Naive thymus-derived CD4-positive, alpha-beta T cell (primary cell): ENCODE measurements at regions of chr10 and their contacts with region 1.

Region 1: DNA sequence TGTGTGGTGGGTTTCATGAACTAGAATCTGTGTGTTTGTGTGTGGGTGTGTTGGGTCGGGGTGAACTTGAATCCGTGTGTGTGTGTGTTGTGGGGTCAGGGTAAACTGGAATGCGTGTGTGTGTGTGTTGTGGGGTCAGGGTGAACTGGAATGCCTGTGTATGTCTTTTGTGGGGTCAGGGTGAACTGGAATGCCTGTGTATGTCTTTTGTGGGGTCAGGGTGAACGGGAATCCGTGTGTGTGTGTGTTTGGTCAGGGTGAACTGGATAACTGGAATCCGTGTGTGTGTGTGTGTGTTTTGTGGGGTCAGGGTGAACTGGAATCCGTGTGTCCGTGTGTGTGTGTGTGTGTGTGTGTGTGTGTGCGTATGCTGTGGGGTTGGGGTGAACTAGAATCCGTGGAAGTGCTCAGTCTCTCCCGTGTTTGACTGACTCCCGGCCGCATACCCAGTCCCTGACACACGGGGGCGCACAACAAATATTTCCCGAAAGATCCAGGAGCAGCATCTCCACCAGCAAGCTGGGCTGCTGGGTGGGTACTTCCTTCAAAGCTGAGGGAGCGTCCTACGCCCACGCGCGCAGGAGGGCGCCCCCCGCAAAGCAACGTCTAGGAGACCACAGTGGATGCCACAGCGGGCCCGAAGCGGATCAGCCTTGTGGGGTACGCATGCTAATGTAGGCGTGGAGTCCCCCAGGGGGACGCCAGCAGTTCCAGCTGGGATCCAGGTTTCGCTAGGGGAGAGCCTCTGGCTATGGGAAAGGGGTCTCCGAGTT is 836 bp upstream of the CASP7 start:
- DNase-seq: peak; percentile 32 to 73 (median 51)
- ATAC-seq: peak; percentile 55
- H3K4me3 ChIP-seq: peak overlapping the region; percentile 96
- H3K4me3 Mint-ChIP-seq: peak overlapping the region; percentile 90 to 100 (median 94)
- H3K27ac ChIP-seq: peak overlapping the region; percentile 70
- H3K27ac Mint-ChIP-seq: peak overlapping the region; percentile 56 to 96 (median 90)
- H3K4me1 ChIP-seq: peaks cover 6 to 11% of the 10 kb centered on the region in 2 donors
- H3K4me1 Mint-ChIP-seq: peaks cover 36 to 44% (median 40%) of the 10 kb centered on the region in 7 donors
- H3K27me3 ChIP-seq: no peaks in the 10 kb centered on the region
- H3K27me3 Mint-ChIP-seq: peaks cover 0 to 17% (median 3%) of the 10 kb centered on the region in 5 donors

Region 2: GRCh38 chr10:112375721-112376395 is 1303.0 kb before region 1 on chr10:
- CTCF ChIA-PET with region 1: no interaction called
- POLR2A ChIA-PET with region 1: no interaction called
- intact Hi-C with region 1: loop called in 1 of 2 experiments (anchors 2 kb)
- DNase-seq: peak; percentile 33 to 70 (median 59)
- ATAC-seq: peak; percentile 87
- H3K4me3 ChIP-seq: peak overlapping the region; percentile 89
- H3K4me3 Mint-ChIP-seq: peak overlapping the region; percentile 95 to 100 (median 100)
- H3K27ac ChIP-seq: peak overlapping the region; percentile 95
- H3K27ac Mint-ChIP-seq: peak overlapping the region; percentile 97 to 100 (median 99)
- H3K4me1 ChIP-seq: peaks cover 11 to 21% of the 10 kb centered on the region in 2 donors
- H3K4me1 Mint-ChIP-seq: peaks cover 36 to 72% (median 61%) of the 10 kb centered on the region in 7 donors
- H3K27me3 ChIP-seq: no peaks in the 10 kb centered on the region
- H3K27me3 Mint-ChIP-seq: no peaks in the 10 kb centered on the region

Region 3: GRCh38 chr10:112461029-112461887 is 1217.6 kb before region 1 on chr10:
- CTCF ChIA-PET with region 1: no interaction called
- POLR2A ChIA-PET with region 1: no interaction called
- intact Hi-C with region 1: no loop called
- DNase-seq: no peak
- ATAC-seq: no peak
- H3K4me3 ChIP-seq: no peak overlapping the region
- H3K4me3 Mint-ChIP-seq: no peak overlapping the region
- H3K27ac ChIP-seq: no peak overlapping the region
- H3K27ac Mint-ChIP-seq: peak overlapping the region in 1 of 9 donors; percentile 51
- H3K4me1 ChIP-seq: no peaks in the 10 kb centered on the region
- H3K4me1 Mint-ChIP-seq: peaks cover 0 to 25% (median 7%) of the 10 kb centered on the region in 7 donors
- H3K27me3 ChIP-seq: no peaks in the 10 kb centered on the region
- H3K27me3 Mint-ChIP-seq: no peaks in the 10 kb centered on the region

Region 4: GRCh38 chr10:113399065-113399464 is 279.8 kb before region 1 on chr10:
- CTCF ChIA-PET with region 1: no interaction called
- POLR2A ChIA-PET with region 1: no interaction called
- intact Hi-C with region 1: no loop called
- DNase-seq: no peak
- ATAC-seq: no peak
- H3K4me3 ChIP-seq: no peak overlapping the region
- H3K4me3 Mint-ChIP-seq: no peak overlapping the region
- H3K27ac ChIP-seq: no peak overlapping the region
- H3K27ac Mint-ChIP-seq: no peak overlapping the region
- H3K4me1 ChIP-seq: no peaks in the 10 kb centered on the region
- H3K4me1 Mint-ChIP-seq: no peaks in the 10 kb centered on the region
- H3K27me3 ChIP-seq: no peaks in the 10 kb centered on the region
- H3K27me3 Mint-ChIP-seq: peaks cover 2 to 8% (median 4%) of the 10 kb centered on the region in 5 donors

Region 5: GRCh38 chr10:113704637-113705343 is 25.9 kb after region 1 on chr10:
- CTCF ChIA-PET with region 1: no interaction called
- POLR2A ChIA-PET with region 1: no interaction called
- intact Hi-C with region 1: loop called in 1 of 2 experiments (anchors 1 kb)
- DNase-seq: peak in 5 of 9 donors; percentile 12 to 30 (median 19)
- ATAC-seq: no peak
- H3K4me3 ChIP-seq: no peak overlapping the region
- H3K4me3 Mint-ChIP-seq: no peak overlapping the region
- H3K27ac ChIP-seq: no peak overlapping the region
- H3K27ac Mint-ChIP-seq: no peak overlapping the region
- H3K4me1 ChIP-seq: peaks cover 0 to 11% of the 10 kb centered on the region in 2 donors
- H3K4me1 Mint-ChIP-seq: peaks cover 20 to 39% (median 33%) of the 10 kb centered on the region in 7 donors
- H3K27me3 ChIP-seq: no peaks in the 10 kb centered on the region
- H3K27me3 Mint-ChIP-seq: no peaks in the 10 kb centered on the region

Region 6: GRCh38 chr10:113854011-113854760 is 175.3 kb after region 1 on chr10 and contains the starts of genes DCLRE1A and NHLRC2:
- CTCF ChIA-PET with region 1: no interaction called
- POLR2A ChIA-PET with region 1: interaction called, 3 read pairs
- intact Hi-C with region 1: loop called (anchors 1 to 2 kb)
- DNase-seq: peak; percentile 26 to 55 (median 50)
- ATAC-seq: peak; percentile 73
- H3K4me3 ChIP-seq: peak within 1 kb of the TSS; percentile 90
- H3K4me3 Mint-ChIP-seq: peak within 1 kb of the TSS; percentile 90 to 100 (median 97)
- H3K27ac ChIP-seq: peak within 1 kb of the TSS; percentile 79
- H3K27ac Mint-ChIP-seq: peak within 1 kb of the TSS; percentile 89 to 100 (median 97)
- H3K4me1 ChIP-seq: peaks cover 3 to 42% of the 10 kb centered on the region in 2 donors
- H3K4me1 Mint-ChIP-seq: peaks cover 24 to 60% (median 52%) of the 10 kb centered on the region in 7 donors
- H3K27me3 ChIP-seq: no peaks in the 10 kb centered on the region
- H3K27me3 Mint-ChIP-seq: no peaks in the 10 kb centered on the region
- total RNA-seq, gene DCLRE1A: 1.5 to 12.9 (median 4.3) TPM
- total RNA-seq, gene NHLRC2: 10.3 to 25.9 (median 20.5) TPM

Region 7: GRCh38 chr10:114103284-114103683 is 424.4 kb after region 1 on chr10:
- CTCF ChIA-PET with region 1: interaction called, 3 read pairs
- POLR2A ChIA-PET with region 1: no interaction called
- intact Hi-C with region 1: loop called (anchors 1 to 5 kb)
- DNase-seq: peak in 5 of 9 donors; percentile 17 to 39 (median 34)
- ATAC-seq: no peak
- H3K4me3 ChIP-seq: no peak overlapping the region
- H3K4me3 Mint-ChIP-seq: peak overlapping the region in 3 of 10 donors; percentile 6 to 39 (median 13)
- H3K27ac ChIP-seq: no peak overlapping the region
- H3K27ac Mint-ChIP-seq: no peak overlapping the region
- H3K4me1 ChIP-seq: peaks cover 7 to 10% of the 10 kb centered on the region in 2 donors
- H3K4me1 Mint-ChIP-seq: peaks cover 16 to 31% (median 25%) of the 10 kb centered on the region in 7 donors
- H3K27me3 ChIP-seq: peaks cover 4 to 6% of the 10 kb centered on the region in 2 donors
- H3K27me3 Mint-ChIP-seq: peaks cover 24 to 46% (median 27%) of the 10 kb centered on the region in 5 donors

Region 8: DNA sequence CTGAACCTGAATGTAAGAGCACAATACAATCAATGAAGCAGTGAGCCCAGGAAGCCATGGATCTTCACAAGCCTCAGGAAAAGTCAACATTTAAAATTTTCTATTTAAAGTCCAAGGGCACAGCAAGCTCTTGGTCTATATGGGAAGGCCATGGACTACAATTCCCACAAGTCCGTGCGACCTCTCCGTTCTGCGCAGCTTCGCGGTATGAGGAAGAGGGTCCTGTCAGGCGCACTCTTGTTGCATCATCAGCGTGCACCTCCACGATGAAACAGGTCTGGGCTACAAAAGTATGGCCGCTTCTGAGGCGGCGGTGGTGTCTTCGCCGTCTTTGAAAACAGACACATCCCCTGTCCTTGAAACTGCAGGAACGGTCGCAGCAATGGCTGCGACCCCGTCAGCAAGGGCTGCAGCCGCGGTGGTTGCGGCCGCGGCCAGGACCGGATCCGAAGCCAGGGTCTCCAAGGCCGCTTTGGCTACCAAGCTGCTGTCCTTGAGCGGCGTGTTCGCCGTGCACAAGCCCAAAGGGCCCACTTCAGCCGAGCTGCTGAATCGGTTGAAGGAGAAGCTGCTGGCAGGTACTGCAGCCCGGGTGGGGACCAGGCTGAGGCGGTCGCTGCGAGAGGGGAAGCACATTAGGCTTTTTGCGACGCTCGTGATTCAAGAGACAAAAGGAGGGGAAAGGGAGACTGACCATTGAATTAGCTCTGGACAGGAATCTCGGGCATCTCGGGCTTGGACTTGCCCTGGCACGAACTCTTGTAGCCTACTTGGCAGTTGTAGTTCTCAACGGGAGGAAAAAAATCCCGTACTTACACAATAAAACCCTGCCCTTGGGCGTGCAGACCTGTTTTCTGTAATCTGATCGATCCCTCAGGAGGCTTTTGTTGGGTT is 1259.3 kb after region 1 on chr10 and contains the start of gene TRUB1:
- CTCF ChIA-PET with region 1: no interaction called
- POLR2A ChIA-PET with region 1: no interaction called
- intact Hi-C with region 1: loop called (anchors 2 to 10 kb)
- DNase-seq: peak; percentile 59 to 91 (median 87)
- ATAC-seq: peak; percentile 100
- H3K4me3 ChIP-seq: peak within 1 kb of the TSS; percentile 87
- H3K4me3 Mint-ChIP-seq: peak within 1 kb of the TSS; percentile 94 to 99 (median 96)
- H3K27ac ChIP-seq: peak within 1 kb of the TSS; percentile 79
- H3K27ac Mint-ChIP-seq: peak within 1 kb of the TSS; percentile 95 to 98 (median 96)
- H3K4me1 ChIP-seq: peaks cover 12 to 23% of the 10 kb centered on the region in 2 donors
- H3K4me1 Mint-ChIP-seq: peaks cover 20 to 43% (median 31%) of the 10 kb centered on the region in 7 donors
- H3K27me3 ChIP-seq: no peaks in the 10 kb centered on the region
- H3K27me3 Mint-ChIP-seq: no peaks in the 10 kb centered on the region
- total RNA-seq, gene TRUB1: 6.8 to 14.6 (median 12.9) TPM